Heart left ventricle (tissue), 16 donors: ENCODE measurements at regions of chr10 and their contacts with region 1.

Region 1: DNA sequence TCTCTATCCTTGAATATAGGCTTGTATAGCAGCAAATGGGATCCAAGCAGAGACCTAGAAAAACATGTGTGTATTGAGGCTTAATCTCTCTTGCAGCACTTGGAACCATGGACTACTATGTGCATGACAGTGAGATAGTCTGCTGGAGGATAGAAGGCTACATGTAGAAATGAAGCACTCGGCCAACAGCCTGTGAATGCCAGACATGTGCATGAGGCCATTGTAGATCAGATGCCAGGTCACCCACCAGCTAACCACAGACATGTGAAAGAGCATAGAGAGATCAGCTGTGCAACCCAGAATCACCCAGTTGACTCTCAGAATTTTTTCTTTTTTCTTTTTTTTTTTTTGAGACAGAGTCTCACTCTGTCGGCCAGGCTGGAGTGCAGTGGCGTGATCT is 90.9 kb downstream of the NT5C2 start:
- DNase-seq: no peak
- ATAC-seq: peak; percentile 16 to 65 (median 51)
- H3K4me3 ChIP-seq: no peak overlapping the region
- H3K27ac ChIP-seq: peak overlapping the region in 1 of 12 donors; percentile 5
- H3K4me1 ChIP-seq: peaks cover 0 to 22% (median 3%) of the 10 kb centered on the region in 12 donors
- H3K27me3 ChIP-seq: no peaks in the 10 kb centered on the region
- CTCF ChIP-seq: no peak
- POLR2A ChIP-seq: no peak

Region 2: GRCh38 chr10:103139803-103140202 is 37.6 kb after region 1 on chr10:
- intact Hi-C with region 1: loop called in 1 of 10 experiments (anchors 5 kb)
- DNase-seq: no peak
- ATAC-seq: no peak
- H3K4me3 ChIP-seq: no peak overlapping the region
- H3K27ac ChIP-seq: no peak overlapping the region
- H3K4me1 ChIP-seq: peaks cover 0 to 19% (median 7%) of the 10 kb centered on the region in 12 donors
- H3K27me3 ChIP-seq: no peaks in the 10 kb centered on the region
- CTCF ChIP-seq: no peak
- POLR2A ChIP-seq: no peak

Region 3: DNA sequence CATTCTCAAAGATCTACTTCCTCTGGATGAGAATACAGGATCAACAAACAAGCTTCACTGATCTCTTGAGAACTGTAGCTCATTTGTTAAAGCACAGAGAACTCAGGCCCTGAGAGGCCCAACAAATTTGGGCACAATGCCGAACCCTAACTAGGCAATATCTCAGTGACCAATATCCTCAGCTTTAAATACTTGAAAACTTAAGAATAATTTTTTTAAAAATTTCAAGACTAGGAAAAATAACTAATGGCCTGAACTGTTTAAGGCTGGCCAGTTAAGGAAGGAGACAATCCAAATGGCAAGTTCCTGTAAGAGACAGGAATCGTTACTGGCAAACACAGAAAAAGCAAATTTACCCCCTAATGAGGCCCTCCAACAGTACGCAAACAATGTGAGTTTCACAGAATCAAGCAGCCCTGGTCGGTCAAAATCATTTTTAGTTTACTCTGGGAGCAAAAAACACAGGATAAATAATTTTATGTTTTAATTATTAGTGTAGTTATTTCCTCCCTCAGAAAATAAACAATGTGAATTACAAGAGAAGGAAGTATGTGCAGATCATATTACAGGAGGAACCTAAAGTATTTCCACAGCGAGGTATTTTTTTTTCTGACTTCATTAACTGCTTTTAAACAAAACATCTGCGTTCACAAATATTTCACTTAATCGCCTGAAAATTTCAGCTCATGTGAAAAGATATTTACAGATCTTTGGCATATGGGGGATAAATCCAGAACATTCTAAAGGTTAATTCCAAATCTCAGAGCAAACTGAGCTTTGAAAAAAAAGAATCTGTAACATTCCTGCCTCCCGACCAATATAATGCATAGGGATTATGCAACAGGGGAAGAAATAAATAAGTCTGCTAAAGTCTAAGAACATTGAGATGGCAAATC is 51.4 kb after region 1 on chr10:
- intact Hi-C with region 1: loop called in 1 of 10 experiments (anchors 5 kb)
- DNase-seq: peak in 1 of 5 donors; percentile 20
- ATAC-seq: peak in 2 of 4 donors; percentile 57 to 59
- H3K4me3 ChIP-seq: peak overlapping the region in 9 of 12 donors; percentile 16 to 46 (median 40)
- H3K27ac ChIP-seq: peak overlapping the region; percentile 64 to 87 (median 77)
- H3K4me1 ChIP-seq: peaks cover 0 to 67% (median 50%) of the 10 kb centered on the region in 12 donors
- H3K27me3 ChIP-seq: no peaks in the 10 kb centered on the region
- CTCF ChIP-seq: no peak
- POLR2A ChIP-seq: no peak

Region 4: DNA sequence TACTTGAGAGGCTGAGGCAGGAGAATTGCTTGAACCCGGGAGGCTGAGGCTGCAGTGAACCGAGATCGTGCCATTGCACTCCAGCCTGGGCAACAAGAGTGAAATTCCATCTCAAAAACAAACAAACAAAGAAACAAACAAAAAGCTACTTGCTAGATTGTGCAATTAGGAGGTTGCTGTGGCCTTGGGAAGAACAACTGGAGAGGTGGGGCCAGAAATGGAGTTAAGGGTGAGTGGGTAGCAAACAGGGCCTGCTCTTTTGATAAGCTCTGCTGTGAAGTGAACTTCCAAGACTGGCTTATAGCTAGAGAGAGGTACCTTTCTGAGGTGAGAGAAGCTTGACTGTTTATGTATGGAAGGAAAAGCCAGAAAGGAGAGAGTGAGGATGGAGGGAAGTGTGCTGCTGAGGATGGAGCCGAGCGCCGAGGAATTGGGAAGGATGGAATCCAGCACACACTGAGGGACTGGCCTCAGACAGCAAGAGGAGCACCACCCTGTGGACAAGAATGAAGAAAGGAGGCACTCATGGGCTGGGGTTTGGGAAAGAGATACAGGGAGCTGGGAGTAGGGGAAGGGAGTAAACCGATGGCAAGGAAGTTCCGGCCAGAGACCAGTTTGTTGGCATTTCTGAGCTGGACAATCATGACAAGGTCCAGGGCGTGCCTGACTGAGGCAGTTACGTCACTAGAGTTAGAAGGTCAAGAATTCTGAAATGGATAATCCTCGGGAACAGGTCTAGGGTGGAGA is 136.5 kb after region 1 on chr10:
- intact Hi-C with region 1: loop called in 8 of 10 experiments (anchors 5 to 10 kb)
- DNase-seq: peak in 3 of 5 donors; percentile 35
- ATAC-seq: peak; percentile 55 to 90 (median 80)
- H3K4me3 ChIP-seq: no peak overlapping the region
- H3K27ac ChIP-seq: no peak overlapping the region
- H3K4me1 ChIP-seq: peaks cover 0 to 31% (median 7%) of the 10 kb centered on the region in 12 donors
- H3K27me3 ChIP-seq: no peaks in the 10 kb centered on the region
- CTCF ChIP-seq: peak in 10 of 12 donors; percentile 9 to 60 (median 34)
- POLR2A ChIP-seq: no peak